ENCODE measurements at regions of chr15 and their contacts with region 1.

Region 1: GRCh38 chr15:81274931-81275707 is 48.8 kb downstream of the STARD5 start:
- DNase-seq: peak; percentile 94
- H3K4me3 Mint-ChIP-seq: no peak overlapping the region
- H3K27ac Mint-ChIP-seq: peak overlapping the region; percentile 56
- H3K4me1 Mint-ChIP-seq: peaks cover 51% of the 10 kb centered on the region
- H3K27me3 Mint-ChIP-seq: no peaks in the 10 kb centered on the region

Region 2: GRCh38 chr15:81296673-81297072 is 21.6 kb after region 1 on chr15:
- CTCF ChIA-PET with region 1: interaction called, 43 read pairs
- intact Hi-C with region 1: loop called (anchors 1 kb)
- DNase-seq: peak; percentile 90
- H3K4me3 Mint-ChIP-seq: peak overlapping the region; percentile 93
- H3K27ac Mint-ChIP-seq: peak overlapping the region; percentile 99
- H3K4me1 Mint-ChIP-seq: peaks cover 66% of the 10 kb centered on the region
- H3K27me3 Mint-ChIP-seq: no peaks in the 10 kb centered on the region

Region 3: DNA sequence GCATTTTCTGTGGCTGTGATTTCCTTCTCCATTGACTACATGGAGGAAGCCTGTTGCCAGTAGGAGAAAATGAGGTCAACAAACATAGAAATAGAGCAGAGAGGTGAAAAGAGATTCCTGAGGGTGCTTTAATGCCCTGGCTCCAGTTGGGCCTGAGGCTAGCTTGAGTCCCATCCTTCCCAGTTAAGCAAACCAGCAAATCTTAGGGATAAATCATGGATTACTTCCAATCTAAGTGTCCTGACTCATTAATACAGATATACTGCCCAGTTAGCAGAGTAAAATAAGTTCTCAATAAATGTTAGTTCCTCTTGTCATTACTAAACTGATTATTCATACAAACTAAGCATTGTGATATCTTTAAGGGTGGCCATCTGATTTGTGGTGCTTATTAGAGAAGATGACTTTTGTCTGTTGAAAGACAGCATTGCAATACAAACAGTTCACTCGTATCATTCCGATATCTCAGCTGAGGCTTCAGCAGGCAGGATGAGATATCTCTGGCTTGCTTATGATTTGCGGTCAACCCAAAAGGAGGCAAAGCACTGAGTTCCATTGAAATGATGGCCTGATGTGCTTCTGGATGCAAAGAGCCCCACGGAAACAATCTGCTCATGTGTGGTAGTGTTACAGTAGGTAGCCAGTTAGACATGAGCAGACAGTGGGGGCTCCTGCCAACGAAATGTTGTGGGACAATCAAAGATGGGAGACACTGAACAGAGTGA is 55.4 kb after region 1 on chr15:
- CTCF ChIA-PET with region 1: interaction called, 65 read pairs
- intact Hi-C with region 1: no loop called
- DNase-seq: no peak
- H3K4me3 Mint-ChIP-seq: peak overlapping the region; percentile 46
- H3K27ac Mint-ChIP-seq: no peak overlapping the region
- H3K4me1 Mint-ChIP-seq: peaks cover 31% of the 10 kb centered on the region
- H3K27me3 Mint-ChIP-seq: no peaks in the 10 kb centered on the region

Region 4: GRCh38 chr15:81400640-81401236 is 125.6 kb after region 1 on chr15:
- CTCF ChIA-PET with region 1: interaction called, 98 read pairs
- intact Hi-C with region 1: loop called (anchors 1 kb)
- DNase-seq: no peak
- H3K4me3 Mint-ChIP-seq: no peak overlapping the region
- H3K27ac Mint-ChIP-seq: no peak overlapping the region
- H3K4me1 Mint-ChIP-seq: no peaks in the 10 kb centered on the region
- H3K27me3 Mint-ChIP-seq: no peaks in the 10 kb centered on the region